HAP-1 (cell line): ENCODE measurements at regions of chr19 and their contacts with region 1.

Region 1: DNA sequence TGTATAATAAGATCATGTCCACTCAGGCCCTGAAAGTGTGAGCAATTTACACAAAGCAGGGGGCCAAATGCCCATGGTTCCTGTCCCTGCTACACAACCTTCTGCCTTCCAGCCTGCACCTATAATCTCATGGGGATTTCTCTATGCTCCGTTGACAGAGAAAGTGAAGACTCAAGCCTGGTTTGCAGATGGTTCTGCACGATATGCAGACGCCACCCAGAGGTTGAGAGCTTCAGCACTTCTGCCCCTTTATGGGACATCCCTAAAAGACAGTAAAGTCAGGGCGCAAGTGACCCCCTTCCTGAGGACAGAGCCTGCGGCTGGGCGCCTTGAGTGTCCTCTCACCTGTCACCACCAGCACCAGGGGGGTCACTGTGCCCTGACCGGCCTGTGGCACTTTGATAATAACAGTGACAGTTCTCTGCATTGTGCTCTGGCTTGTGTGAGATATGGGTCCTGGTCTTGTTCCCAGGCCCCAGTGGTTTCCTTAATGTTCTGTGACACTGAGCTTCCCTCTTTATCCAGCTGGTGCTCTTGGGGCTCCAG is 15.1 kb downstream of the LILRA5 start:
- DNase-seq: no peak
- H3K4me3 ChIP-seq: no peak overlapping the region
- H3K4me1 ChIP-seq: no peaks in the 10 kb centered on the region
- H3K27me3 ChIP-seq: 0 out of 2 replicates have a peak, but pooled peaks cover 3% of the 10 kb centered on the region

Region 2: DNA sequence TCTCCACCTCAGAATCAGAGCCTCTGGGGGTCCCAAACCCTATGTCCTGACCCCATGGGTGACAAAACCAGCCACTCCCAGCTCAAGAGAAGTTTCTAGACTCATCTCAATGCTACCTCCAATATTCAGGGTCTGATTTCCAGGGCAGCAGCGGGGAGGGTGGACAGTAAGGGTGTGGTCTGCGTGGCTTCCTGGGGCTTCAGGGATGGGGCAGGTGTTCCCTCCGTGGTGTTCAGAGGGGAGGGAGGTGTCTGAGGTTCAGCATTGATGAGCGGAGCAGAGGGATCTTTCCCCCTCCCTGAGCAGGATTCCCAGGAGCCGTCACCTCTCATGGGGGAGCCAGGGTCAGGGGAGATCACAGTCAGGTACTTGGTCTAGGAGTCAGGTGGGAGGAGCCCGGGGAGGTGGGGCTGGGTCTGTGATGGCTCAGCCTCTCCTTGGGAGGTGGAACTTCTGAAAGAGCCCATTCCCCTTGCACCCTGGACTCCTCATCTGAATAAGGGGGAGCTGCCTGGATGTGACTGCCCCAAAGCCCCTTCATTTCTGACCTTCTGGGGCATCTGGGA is 278.7 kb after region 1 on chr19:
- in situ Hi-C with region 1: loop called (anchors 5 kb)
- DNase-seq: no peak
- H3K4me3 ChIP-seq: no peak overlapping the region
- H3K4me1 ChIP-seq: no peaks in the 10 kb centered on the region
- H3K27me3 ChIP-seq: no peaks in the 10 kb centered on the region

Region 3: DNA sequence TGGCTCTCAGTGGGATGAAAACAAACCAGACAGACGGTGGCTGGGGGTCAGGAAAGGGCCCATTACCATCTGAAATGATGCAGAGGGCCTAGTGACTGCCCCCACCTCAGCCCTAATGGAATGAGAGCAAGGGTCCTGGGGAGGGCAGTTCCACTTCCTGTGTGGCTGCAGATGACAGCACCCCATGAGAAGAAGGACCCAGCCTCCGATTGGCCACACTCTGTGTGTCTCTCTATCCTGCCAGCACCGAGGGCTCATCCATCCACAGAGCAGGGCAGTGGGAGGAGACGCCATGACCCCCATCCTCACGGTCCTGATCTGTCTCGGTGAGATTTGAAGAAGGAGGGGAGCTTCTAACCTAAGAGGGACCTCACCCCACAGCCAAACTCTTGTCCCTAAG is 332.9 kb after region 1 on chr19:
- in situ Hi-C with region 1: loop called (anchors 5 kb)
- DNase-seq: no peak
- H3K4me3 ChIP-seq: no peak overlapping the region
- H3K4me1 ChIP-seq: no peaks in the 10 kb centered on the region
- H3K27me3 ChIP-seq: no peaks in the 10 kb centered on the region